IMR-90 (cell line): ENCODE measurements at regions of chr15 and their contacts with region 1.

Region 1: DNA sequence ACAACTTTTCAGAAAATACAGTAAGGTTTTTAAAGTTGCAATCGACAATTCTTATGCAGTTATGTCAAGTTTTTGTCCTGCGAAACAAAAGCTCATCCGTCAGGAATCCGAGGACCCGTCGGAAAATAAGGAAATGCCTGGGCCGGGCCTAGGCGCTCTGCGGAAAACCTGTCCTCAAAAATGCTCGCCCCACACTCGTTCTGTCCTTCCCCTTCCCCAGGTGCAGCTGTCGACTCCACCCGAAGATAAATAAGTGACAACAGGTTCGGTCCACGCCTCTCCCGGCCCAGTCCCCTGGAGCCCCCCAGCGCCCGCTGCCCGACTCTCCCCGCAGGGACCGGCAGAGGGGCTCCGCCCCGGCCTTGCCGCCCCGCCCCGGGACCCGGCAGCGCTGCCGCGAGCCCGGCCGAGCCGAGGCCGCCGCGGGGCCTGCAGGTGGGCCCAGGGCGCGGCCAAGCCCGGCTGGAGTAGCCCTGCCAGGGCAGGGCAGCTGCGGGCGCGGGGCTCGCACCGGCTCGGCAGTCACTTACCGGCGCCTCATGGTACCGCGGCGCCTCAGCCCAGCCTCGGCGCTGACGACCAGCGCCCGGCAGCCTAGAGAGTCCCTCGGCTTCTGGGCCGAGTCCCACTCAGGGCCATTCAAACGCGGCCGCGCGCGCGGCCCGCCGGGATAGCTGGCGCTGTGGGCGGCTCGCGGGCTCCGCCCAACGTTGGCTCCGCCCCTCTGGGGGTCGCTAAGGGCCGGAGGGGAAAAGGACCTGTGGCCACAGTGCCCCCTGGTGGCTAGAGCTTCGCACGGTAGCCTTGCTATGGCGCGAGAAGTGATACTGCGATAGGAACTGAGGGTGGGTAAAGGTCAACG is at the start of gene KATNBL1:
- DNase-seq: peak; percentile 90
- ATAC-seq: peak; percentile 98
- H3K4me3 ChIP-seq: peak within 1 kb of the TSS; percentile 73
- H3K27ac ChIP-seq: peak within 1 kb of the TSS; percentile 80
- H3K4me1 ChIP-seq: peaks cover 2% of the 10 kb centered on the region
- H3K27me3 ChIP-seq: no peaks in the 10 kb centered on the region
- CTCF ChIP-seq: peak; percentile 95
- POLR2A ChIP-seq: peak; percentile 96
- RAD21 ChIP-seq: peak; percentile 81
- total RNA-seq, gene KATNBL1: 24.0 and 50.5 TPM in 2 replicates

Region 2: DNA sequence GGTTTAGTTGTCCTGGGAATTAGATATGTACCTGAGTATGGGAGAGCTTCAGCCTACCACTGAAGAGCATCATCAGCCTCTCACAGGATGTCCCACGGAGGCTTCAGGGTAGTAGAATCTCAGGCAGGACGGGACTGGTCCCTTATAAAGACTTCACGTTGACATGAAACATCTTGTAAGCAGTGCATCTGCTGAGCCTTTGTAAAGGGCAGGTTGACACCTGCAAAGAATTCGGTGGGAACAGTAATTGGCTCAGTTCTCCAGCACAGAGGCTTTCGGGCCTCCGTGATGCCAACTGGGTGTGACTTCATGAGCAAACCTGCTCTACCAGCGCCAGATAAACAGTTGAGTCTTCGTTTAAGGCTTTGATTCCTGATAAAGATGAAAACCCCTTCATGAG is 143.7 kb before region 1 on chr15:
- CTCF ChIA-PET with region 1: interaction called, 3 read pairs
- POLR2A ChIA-PET with region 1: no interaction called
- dilution Hi-C with region 1: no loop called
- in situ Hi-C with region 1: loop called (anchors 10 kb)
- intact Hi-C with region 1: loop called (anchors 1 kb)
- DNase-seq: no peak
- ATAC-seq: no peak
- H3K4me3 ChIP-seq: no peak overlapping the region
- H3K27ac ChIP-seq: no peak overlapping the region
- H3K4me1 ChIP-seq: no peaks in the 10 kb centered on the region
- H3K27me3 ChIP-seq: no peaks in the 10 kb centered on the region
- CTCF ChIP-seq: no peak
- POLR2A ChIP-seq: no peak
- RAD21 ChIP-seq: no peak

Region 3: DNA sequence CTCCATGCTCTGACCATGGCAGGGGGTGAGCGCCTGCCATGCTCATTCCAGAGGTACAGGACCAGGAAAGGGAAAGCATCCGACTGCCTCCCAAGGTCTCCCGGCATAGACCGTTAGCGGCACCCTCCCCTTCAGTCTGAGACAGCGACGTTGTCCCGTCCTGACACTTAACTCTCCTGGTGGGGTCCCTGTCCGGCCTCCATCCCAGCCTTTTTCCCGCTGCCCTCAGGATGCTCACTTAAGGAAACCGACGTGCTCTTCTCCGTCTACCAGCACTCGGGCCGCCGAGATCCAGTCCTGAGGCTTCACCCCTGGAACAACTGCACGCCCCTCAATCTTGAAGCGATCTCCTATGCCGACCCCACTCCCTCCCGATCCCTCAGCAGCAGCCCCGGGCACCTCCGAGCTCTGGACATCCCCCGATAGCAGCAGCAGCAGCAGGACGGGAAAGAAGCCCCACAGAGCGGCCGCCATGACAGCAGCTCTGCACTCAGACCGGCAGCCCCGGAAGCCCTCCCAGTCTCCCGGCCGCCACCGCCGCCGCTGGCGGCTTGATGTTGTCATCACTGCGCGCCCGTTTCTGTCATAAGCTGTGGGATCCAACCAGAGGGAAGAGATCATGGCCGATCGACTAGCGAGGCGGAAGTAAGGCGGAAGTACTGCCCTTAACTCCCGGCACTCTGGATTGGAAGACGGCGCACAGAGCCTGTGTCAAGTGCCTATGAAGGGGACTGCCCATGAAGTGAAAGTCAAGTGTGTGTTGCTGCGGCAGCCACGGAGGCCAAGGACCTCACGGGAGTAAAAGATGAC is 108.1 kb before region 1 on chr15 and contains the starts of genes EMC7 and PGBD4:
- CTCF ChIA-PET with region 1: no interaction called
- POLR2A ChIA-PET with region 1: no interaction called
- dilution Hi-C with region 1: no loop called
- in situ Hi-C with region 1: loop called (anchors 5 kb)
- intact Hi-C with region 1: no loop called
- DNase-seq: peak; percentile 100
- ATAC-seq: peak; percentile 99
- H3K4me3 ChIP-seq: peak within 1 kb of the TSS; percentile 76
- H3K27ac ChIP-seq: peak within 1 kb of the TSS; percentile 88
- H3K4me1 ChIP-seq: peaks cover 4% of the 10 kb centered on the region; the same call in 1 of the 2 replicates
- H3K27me3 ChIP-seq: no peaks in the 10 kb centered on the region
- CTCF ChIP-seq: no peak
- POLR2A ChIP-seq: peak; percentile 93
- RAD21 ChIP-seq: no peak
- total RNA-seq, gene EMC7: 46.6 and 58.6 TPM in 2 replicates
- total RNA-seq, gene PGBD4: 1.3 and 1.9 TPM in 2 replicates

Region 4: GRCh38 chr15:34109797-34110663 is 99.6 kb before region 1 on chr15:
- CTCF ChIA-PET with region 1: interaction called, 32 read pairs
- POLR2A ChIA-PET with region 1: no interaction called
- dilution Hi-C with region 1: no loop called
- in situ Hi-C with region 1: no loop called
- intact Hi-C with region 1: loop called (anchors 1 kb)
- DNase-seq: peak; percentile 60
- ATAC-seq: peak; percentile 86
- H3K4me3 ChIP-seq: no peak overlapping the region
- H3K27ac ChIP-seq: no peak overlapping the region
- H3K4me1 ChIP-seq: no peaks in the 10 kb centered on the region; the same call in 1 of the 2 replicates
- H3K27me3 ChIP-seq: no peaks in the 10 kb centered on the region
- CTCF ChIP-seq: peak; percentile 85
- POLR2A ChIP-seq: no peak
- RAD21 ChIP-seq: peak; percentile 88

Region 5: DNA sequence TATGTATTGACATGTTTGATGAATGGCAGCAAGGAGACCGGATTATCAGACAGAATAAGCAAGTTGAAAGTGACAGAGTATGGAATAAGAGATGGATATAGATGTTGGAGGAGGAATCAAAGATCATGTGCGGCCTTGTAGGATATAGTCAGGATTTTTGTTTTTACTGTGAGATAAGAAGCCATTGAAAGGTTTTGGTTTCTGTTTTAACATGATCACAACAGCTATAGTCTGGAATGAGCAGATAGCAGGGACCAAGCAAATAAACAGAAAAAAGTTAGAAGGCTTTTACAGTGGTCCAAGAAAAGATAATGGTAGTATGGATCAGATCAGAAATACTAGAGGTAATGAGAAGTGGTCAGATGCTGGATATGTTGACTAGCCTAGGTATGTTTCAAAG is 75.3 kb after region 1 on chr15:
- CTCF ChIA-PET with region 1: no interaction called
- POLR2A ChIA-PET with region 1: no interaction called
- dilution Hi-C with region 1: no loop called
- in situ Hi-C with region 1: no loop called
- intact Hi-C with region 1: no loop called
- DNase-seq: no peak
- ATAC-seq: peak; percentile 54
- H3K4me3 ChIP-seq: no peak overlapping the region
- H3K27ac ChIP-seq: no peak overlapping the region
- H3K4me1 ChIP-seq: no peaks in the 10 kb centered on the region
- H3K27me3 ChIP-seq: no peaks in the 10 kb centered on the region
- CTCF ChIP-seq: no peak
- POLR2A ChIP-seq: no peak
- RAD21 ChIP-seq: no peak